Calu3 (cell line): ENCODE measurements at regions of chr2 and their contacts with region 1.

Region 1: GRCh38 chr2:145906356-145906755 is 1386.4 kb upstream of the ZEB2 start:
- DNase-seq: peak; percentile 62
- H3K4me3 Mint-ChIP-seq: peak overlapping the region; percentile 16
- H3K27ac Mint-ChIP-seq: peak overlapping the region; percentile 89
- H3K4me1 Mint-ChIP-seq: peaks cover 50% of the 10 kb centered on the region
- H3K27me3 Mint-ChIP-seq: no peaks in the 10 kb centered on the region
- CTCF ChIP-seq: no peak

Region 2: GRCh38 chr2:145692971-145693478 is 213.3 kb before region 1 on chr2:
- CTCF ChIA-PET with region 1: no interaction called
- intact Hi-C with region 1: loop called (anchors 5 kb)
- DNase-seq: peak; percentile 82
- H3K4me3 Mint-ChIP-seq: no peak overlapping the region
- H3K27ac Mint-ChIP-seq: peak overlapping the region; percentile 98
- H3K4me1 Mint-ChIP-seq: peaks cover 3% of the 10 kb centered on the region
- H3K27me3 Mint-ChIP-seq: no peaks in the 10 kb centered on the region
- CTCF ChIP-seq: no peak

Region 3: GRCh38 chr2:145760781-145761649 is 145.3 kb before region 1 on chr2:
- CTCF ChIA-PET with region 1: no interaction called
- intact Hi-C with region 1: loop called (anchors 5 kb)
- DNase-seq: peak; percentile 30
- H3K4me3 Mint-ChIP-seq: no peak overlapping the region
- H3K27ac Mint-ChIP-seq: peak overlapping the region; percentile 71
- H3K4me1 Mint-ChIP-seq: no peaks in the 10 kb centered on the region
- H3K27me3 Mint-ChIP-seq: no peaks in the 10 kb centered on the region
- CTCF ChIP-seq: no peak

Region 4: DNA sequence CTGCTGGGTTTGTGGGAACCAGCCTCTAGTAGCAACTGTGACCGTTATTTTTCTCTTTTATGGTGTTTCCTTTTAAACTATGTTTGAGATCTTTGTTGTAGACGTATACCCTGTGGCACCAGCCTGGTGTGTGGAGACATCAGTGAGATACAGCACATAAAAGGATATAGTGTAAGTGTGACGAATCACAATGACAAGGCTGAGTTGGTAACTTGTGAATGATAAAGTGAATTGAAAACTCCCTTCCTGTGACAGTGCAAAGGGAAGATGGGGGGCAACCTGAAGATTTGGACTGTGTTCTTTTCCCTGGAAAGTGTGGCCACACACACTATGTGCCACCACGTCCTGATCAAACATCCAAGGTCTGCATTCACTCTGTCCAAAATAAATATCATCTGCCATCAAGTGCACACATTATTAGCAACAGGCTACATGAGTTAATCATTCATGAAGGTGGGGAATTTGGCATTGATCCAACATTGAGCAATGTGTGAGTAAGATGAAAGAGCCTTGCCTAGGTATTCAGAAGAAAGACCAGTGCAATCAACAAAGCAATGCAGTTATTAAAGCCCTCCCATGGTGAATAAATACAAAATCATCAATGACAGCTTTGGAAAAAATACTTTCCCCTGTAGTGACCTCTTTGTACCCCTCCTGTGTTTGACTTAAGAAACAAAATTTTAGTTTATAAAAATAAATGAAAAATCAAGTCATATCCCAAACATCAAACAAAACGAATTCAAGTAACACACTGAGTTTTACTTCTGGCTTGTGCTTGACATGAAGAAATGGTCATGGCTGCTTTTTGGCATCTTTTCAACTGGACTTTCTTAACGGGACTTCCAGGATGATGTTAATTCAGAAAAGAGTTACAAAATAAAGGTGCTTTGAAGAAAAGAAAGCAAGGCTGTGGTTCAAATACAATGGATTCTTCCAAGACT is 105.9 kb before region 1 on chr2:
- CTCF ChIA-PET with region 1: interaction called, 3 read pairs
- intact Hi-C with region 1: loop called (anchors 5 kb)
- DNase-seq: peak; percentile 83
- H3K4me3 Mint-ChIP-seq: peak overlapping the region; percentile 37
- H3K27ac Mint-ChIP-seq: peak overlapping the region; percentile 87
- H3K4me1 Mint-ChIP-seq: peaks cover 19% of the 10 kb centered on the region
- H3K27me3 Mint-ChIP-seq: no peaks in the 10 kb centered on the region
- CTCF ChIP-seq: no peak

Region 5: GRCh38 chr2:145984541-145984940 is 78.2 kb after region 1 on chr2:
- CTCF ChIA-PET with region 1: no interaction called
- intact Hi-C with region 1: no loop called
- DNase-seq: peak; percentile 15
- H3K4me3 Mint-ChIP-seq: no peak overlapping the region
- H3K27ac Mint-ChIP-seq: no peak overlapping the region
- H3K4me1 Mint-ChIP-seq: peaks cover 26% of the 10 kb centered on the region
- H3K27me3 Mint-ChIP-seq: no peaks in the 10 kb centered on the region
- CTCF ChIP-seq: no peak